Aorta (tissue), 5 donors: ENCODE measurements at regions of chr12 and their contacts with region 1.

Region 1: GRCh38 chr12:68866950-68867349 is 59.0 kb downstream of the MDM2 start:
- DNase-seq: no peak
- ATAC-seq: no peak
- H3K4me3 ChIP-seq: no peak overlapping the region
- H3K27ac ChIP-seq: no peak overlapping the region
- H3K4me1 ChIP-seq: no peaks in the 10 kb centered on the region
- H3K27me3 ChIP-seq: no peaks in the 10 kb centered on the region

Region 2: GRCh38 chr12:69070319-69071090 is 203.6 kb after region 1 on chr12:
- intact Hi-C with region 1: loop called (anchors 5 kb)
- DNase-seq: peak in 1 of 2 donors; percentile 61
- ATAC-seq: peak; percentile 83
- H3K4me3 ChIP-seq: no peak overlapping the region
- H3K27ac ChIP-seq: no peak overlapping the region
- H3K4me1 ChIP-seq: no peaks in the 10 kb centered on the region
- H3K27me3 ChIP-seq: no peaks in the 10 kb centered on the region